ENCODE measurements at regions of chr13 and their contacts with region 1.

Region 1: GRCh38 chr13:44988973-44989817 is at the starts of genes GPALPP1 and NUFIP1:
- DNase-seq: peak; percentile 64
- ATAC-seq: peak; percentile 97
- H3K4me3 ChIP-seq: peak within 1 kb of the TSS; percentile 85
- H3K27ac ChIP-seq: peak within 1 kb of the TSS; percentile 75
- H3K4me1 ChIP-seq: no peaks in the 10 kb centered on the region
- H3K27me3 ChIP-seq: no peaks in the 10 kb centered on the region
- CTCF ChIP-seq: no peak
- EP300 ChIP-seq: no peak
- POLR2A ChIP-seq: peak; percentile 89
- RAD21 ChIP-seq: no peak
- polyA plus RNA-seq, gene GPALPP1: 14.2 to 21.2 TPM
- polyA plus RNA-seq, gene NUFIP1: 2.5 to 4.0 TPM

Region 2: GRCh38 chr13:44930963-44931623 is 58.1 kb before region 1 on chr13:
- CTCF ChIA-PET with region 1: no interaction called
- POLR2A ChIA-PET with region 1: no interaction called
- RAD21 ChIA-PET with region 1: no interaction called
- SMC1A ChIA-PET with region 1: no interaction called
- in situ Hi-C with region 1: loop called (anchors 10 kb)
- intact Hi-C with region 1: no loop called
- DNase-seq: no peak
- ATAC-seq: no peak
- H3K4me3 ChIP-seq: no peak overlapping the region
- H3K27ac ChIP-seq: no peak overlapping the region
- H3K4me1 ChIP-seq: no peaks in the 10 kb centered on the region
- H3K27me3 ChIP-seq: 0 out of 4 replicates have a peak, but pooled peaks cover 0 to under 1% of the 10 kb centered on the region in 2 experiments
- CTCF ChIP-seq: no peak
- EP300 ChIP-seq: no peak
- POLR2A ChIP-seq: no peak
- RAD21 ChIP-seq: no peak

Region 3: GRCh38 chr13:44969551-44970484 is 19.4 kb before region 1 on chr13:
- CTCF ChIA-PET with region 1: interaction called, 5 read pairs
- POLR2A ChIA-PET with region 1: no interaction called
- RAD21 ChIA-PET with region 1: no interaction called
- SMC1A ChIA-PET with region 1: interaction called, 10 read pairs
- in situ Hi-C with region 1: no loop called
- intact Hi-C with region 1: no loop called
- DNase-seq: no peak
- ATAC-seq: peak; percentile 16; the same call in 1 of the 3 replicates
- H3K4me3 ChIP-seq: no peak overlapping the region
- H3K27ac ChIP-seq: no peak overlapping the region
- H3K4me1 ChIP-seq: peaks cover 5% of the 10 kb centered on the region
- H3K27me3 ChIP-seq: no peaks in the 10 kb centered on the region
- CTCF ChIP-seq: peak; percentile 48 to 70 (median 67); a peak in 5 of 6 replicates
- EP300 ChIP-seq: no peak
- POLR2A ChIP-seq: no peak
- RAD21 ChIP-seq: peak; percentile 75

Measured in GM12878 (cell line).